ENCODE measurements at regions of chr11 and their contacts with region 1.

Region 1: DNA sequence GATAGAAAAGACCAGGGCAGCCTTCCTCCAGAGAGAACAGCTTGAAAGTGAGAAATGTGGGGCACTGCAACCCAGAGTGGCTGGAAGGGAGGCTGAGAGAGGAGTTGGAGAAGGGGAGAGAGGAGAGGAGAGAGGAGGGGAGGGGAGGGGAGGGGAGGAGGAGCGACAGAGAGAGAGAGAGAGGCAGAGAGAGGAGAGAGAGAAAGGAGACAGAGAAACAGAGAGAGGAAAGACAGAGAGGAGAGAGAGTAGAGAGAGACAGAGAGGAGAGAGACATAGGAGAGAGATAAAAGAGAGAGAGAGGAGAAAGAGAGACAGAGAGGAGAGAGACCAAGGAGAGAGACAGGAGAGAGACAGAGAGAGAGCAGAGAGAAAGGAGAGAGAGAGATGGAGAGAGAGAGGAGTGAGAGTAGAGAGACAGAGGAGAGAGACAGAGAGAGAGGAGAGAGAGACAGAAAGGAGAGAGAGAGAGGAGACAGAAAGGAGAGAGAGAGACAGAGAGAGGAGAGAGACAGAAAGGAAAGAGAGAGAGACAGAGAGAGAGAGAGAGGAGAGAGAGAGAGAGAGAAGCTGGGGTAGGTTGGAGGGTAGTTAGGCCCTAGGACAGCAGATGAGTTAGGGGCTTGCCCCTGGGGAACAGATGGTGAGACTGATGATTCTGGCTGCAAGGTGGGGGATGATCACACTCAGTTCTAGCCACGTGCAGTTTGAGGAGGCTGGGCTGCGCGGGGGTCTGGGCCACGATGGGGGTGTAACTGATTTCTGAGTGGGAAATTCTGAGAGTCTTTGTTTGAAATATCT is 8.5 kb upstream of the SCYL1 start:
- DNase-seq: no peak
- ATAC-seq: peak; percentile 58
- H3K4me3 Mint-ChIP-seq: no peak overlapping the region
- H3K27ac Mint-ChIP-seq: no peak overlapping the region
- H3K4me1 Mint-ChIP-seq: peaks cover 8% of the 10 kb centered on the region
- H3K27me3 Mint-ChIP-seq: no peaks in the 10 kb centered on the region

Region 2: DNA sequence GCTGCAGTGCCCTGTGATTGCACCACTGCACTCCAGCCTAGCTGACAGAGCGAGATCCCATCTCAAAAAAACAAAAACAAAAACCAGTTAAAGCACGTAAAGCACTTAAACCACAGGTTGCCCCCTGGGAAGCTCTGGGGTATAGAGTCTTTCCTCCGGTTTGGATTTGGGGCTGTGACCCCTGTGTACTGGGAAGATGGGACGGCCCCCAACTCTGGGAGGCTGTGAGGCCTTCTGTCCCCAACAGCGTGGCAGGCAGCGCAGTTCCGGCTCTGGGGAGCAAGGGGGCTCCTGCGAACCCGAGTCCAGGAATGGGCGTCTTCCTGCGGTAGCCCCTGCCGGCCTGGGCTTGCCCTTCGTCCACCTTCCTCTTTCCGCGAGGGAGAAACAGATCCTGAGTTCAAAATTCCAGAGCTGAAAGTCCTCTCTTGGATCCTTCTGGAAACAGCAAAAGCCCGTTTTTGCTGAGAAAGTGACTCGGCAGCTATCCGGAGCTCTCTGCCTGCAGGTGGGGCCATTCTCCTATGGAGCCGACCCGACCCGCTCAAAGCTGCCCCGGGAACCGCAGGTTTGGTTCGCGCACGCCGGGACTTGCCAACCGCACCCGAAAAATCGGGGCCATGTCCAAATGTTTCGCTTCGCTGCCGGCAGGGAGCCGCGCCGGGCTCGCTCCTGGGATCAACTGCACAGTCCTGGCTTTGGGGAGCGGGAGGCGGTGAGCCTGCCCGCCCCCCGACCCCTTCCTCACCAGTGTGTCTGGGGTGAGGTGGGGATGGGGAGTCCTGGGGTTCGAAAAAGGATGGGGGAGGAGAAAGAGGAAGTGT is 290.8 kb before region 1 on chr11:
- CTCF ChIA-PET with region 1: no interaction called
- POLR2A ChIA-PET with region 1: no interaction called
- intact Hi-C with region 1: loop called in 1 of 2 experiments (anchors 10 kb)
- DNase-seq: peak; percentile 81
- ATAC-seq: peak; percentile 88
- H3K4me3 Mint-ChIP-seq: peak overlapping the region; percentile 71
- H3K27ac Mint-ChIP-seq: no peak overlapping the region
- H3K4me1 Mint-ChIP-seq: peaks cover 15% of the 10 kb centered on the region
- H3K27me3 Mint-ChIP-seq: peaks cover 21% of the 10 kb centered on the region

Region 3: DNA sequence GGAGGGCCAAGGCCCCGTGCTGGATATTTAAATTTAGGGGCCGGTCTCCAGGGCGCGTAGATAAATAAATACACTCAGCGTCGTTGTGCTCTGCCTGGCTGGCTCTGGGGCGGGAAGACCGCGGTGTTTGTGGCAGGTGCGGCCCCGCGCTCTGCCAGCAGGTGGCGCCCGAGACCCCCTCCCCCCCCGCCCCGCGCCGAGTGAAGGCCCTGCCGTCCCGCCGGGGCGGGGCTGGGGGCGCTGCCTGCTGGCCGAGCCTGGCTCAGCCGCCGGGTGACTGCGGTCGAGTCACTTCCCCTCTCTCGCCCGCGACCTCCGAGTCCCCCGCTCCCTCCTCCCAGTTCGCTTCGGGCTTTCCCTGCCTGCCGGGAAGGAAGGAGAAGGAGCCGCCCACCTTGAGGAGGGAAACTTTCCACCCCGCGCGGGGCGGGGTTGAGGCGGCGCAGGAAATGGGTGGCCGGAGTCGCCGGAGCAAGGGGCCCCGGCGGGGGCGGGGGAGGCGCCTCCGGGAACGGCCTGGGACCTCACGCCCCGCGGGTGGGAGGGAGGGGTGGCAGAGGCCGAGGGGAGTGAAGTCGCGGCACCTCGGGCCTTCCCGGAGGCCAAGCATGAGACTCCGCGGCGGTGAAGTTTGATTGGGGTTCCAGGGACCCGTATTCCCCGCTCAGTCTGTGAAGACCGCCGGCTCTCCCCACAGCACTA is 57.9 kb after region 1 on chr11:
- CTCF ChIA-PET with region 1: no interaction called
- POLR2A ChIA-PET with region 1: no interaction called
- intact Hi-C with region 1: no loop called
- DNase-seq: peak; percentile 96
- ATAC-seq: peak; percentile 34
- H3K4me3 Mint-ChIP-seq: peak overlapping the region; percentile 90
- H3K27ac Mint-ChIP-seq: peak overlapping the region; percentile 95
- H3K4me1 Mint-ChIP-seq: peaks cover 49% of the 10 kb centered on the region
- H3K27me3 Mint-ChIP-seq: no peaks in the 10 kb centered on the region

Measured in activated CD4-positive, alpha-beta T cell treated with anti-CD3 and anti-CD28 coated beads for 36 hours (primary cell).